ENCODE measurements at regions of chrX and their contacts with region 1.

Region 1: GRCh38 chrX:17788439-17788838 is 51.1 kb downstream of the SCML1 start:
- DNase-seq: no peak
- H3K4me3 ChIP-seq: no peak overlapping the region
- H3K27ac ChIP-seq: peak overlapping the region; percentile 31
- H3K4me1 ChIP-seq: no peaks in the 10 kb centered on the region
- H3K27me3 ChIP-seq: no peaks in the 10 kb centered on the region
- CTCF ChIP-seq: peak in 2 of 3 experiments; percentile 65
- POLR2A ChIP-seq: no peak

Region 2: GRCh38 chrX:15882704-15883539 is 1905.5 kb before region 1 on chrX:
- intact Hi-C with region 1: no loop called
- DNase-seq: no peak
- H3K4me3 ChIP-seq: no peak overlapping the region
- H3K27ac ChIP-seq: no peak overlapping the region
- H3K4me1 ChIP-seq: no peaks in the 10 kb centered on the region
- H3K27me3 ChIP-seq: no peaks in the 10 kb centered on the region
- CTCF ChIP-seq: no peak
- POLR2A ChIP-seq: no peak

Region 3: GRCh38 chrX:18206657-18207056 is 418.2 kb after region 1 on chrX:
- intact Hi-C with region 1: loop called (anchors 2 kb)
- DNase-seq: no peak
- H3K4me3 ChIP-seq: no peak overlapping the region
- H3K27ac ChIP-seq: no peak overlapping the region
- H3K4me1 ChIP-seq: no peaks in the 10 kb centered on the region
- H3K27me3 ChIP-seq: no peaks in the 10 kb centered on the region
- CTCF ChIP-seq: no peak
- POLR2A ChIP-seq: no peak

Measured in vagina (tissue), 2 donors.